Calu3 (cell line): ENCODE measurements at regions of chr3 and their contacts with region 1.

Region 1: GRCh38 chr3:50138266-50139200 is 16.6 kb upstream of the SEMA3F start:
- DNase-seq: no peak
- H3K4me3 Mint-ChIP-seq: no peak overlapping the region
- H3K27ac Mint-ChIP-seq: no peak overlapping the region
- H3K4me1 Mint-ChIP-seq: peaks cover 9% of the 10 kb centered on the region
- H3K27me3 Mint-ChIP-seq: peaks cover 75% of the 10 kb centered on the region
- CTCF ChIP-seq: no peak

Region 2: GRCh38 chr3:50150808-50151686 is 12.5 kb after region 1 on chr3:
- CTCF ChIA-PET with region 1: interaction called, 10 read pairs
- intact Hi-C with region 1: no loop called
- DNase-seq: no peak
- H3K4me3 Mint-ChIP-seq: no peak overlapping the region
- H3K27ac Mint-ChIP-seq: no peak overlapping the region
- H3K4me1 Mint-ChIP-seq: peaks cover 11% of the 10 kb centered on the region
- H3K27me3 Mint-ChIP-seq: peaks cover 61% of the 10 kb centered on the region
- CTCF ChIP-seq: no peak

Region 3: DNA sequence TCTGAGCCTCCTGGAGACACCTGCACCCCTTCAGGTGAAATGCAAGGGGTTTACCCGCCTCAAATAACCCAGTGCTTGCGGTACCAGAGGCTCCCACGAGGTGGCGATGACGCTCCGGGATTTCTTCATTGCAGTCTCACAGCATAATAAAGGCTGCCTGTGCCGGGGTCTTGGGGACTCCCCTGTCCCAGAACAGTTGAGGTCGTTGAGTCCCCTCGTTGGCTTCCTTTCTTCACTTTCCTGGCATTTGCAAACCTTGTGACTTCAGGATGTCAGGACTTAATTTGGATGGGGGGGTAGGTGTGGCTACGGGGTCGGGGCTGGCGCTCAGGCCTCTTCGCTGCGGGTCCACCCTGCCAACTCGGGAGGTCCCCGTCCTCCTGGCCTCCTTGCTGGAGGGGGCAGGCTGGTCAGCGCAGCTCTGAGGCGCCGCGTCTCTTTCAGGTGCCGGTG is 54.2 kb after region 1 on chr3:
- CTCF ChIA-PET with region 1: no interaction called
- intact Hi-C with region 1: no loop called
- DNase-seq: peak; percentile 84
- H3K4me3 Mint-ChIP-seq: no peak overlapping the region
- H3K27ac Mint-ChIP-seq: no peak overlapping the region
- H3K4me1 Mint-ChIP-seq: no peaks in the 10 kb centered on the region
- H3K27me3 Mint-ChIP-seq: peaks cover 15% of the 10 kb centered on the region
- CTCF ChIP-seq: peak; percentile 92